Activated CD4-positive, alpha-beta T cell treated with anti-CD3 and anti-CD28 coated beads for 36 hours (primary cell): ENCODE measurements at regions of chr15 and their contacts with region 1.

Region 1: GRCh38 chr15:63277038-63277892 is at the start of gene APH1B:
- DNase-seq: peak; percentile 80
- ATAC-seq: peak; percentile 83
- H3K4me3 Mint-ChIP-seq: peak within 1 kb of the TSS; percentile 78
- H3K27ac Mint-ChIP-seq: peak within 1 kb of the TSS; percentile 88
- H3K4me1 Mint-ChIP-seq: peaks cover 29% of the 10 kb centered on the region
- H3K27me3 Mint-ChIP-seq: no peaks in the 10 kb centered on the region
- total RNA-seq, gene APH1B: 6.5 to 7.8 TPM

Region 2: GRCh38 chr15:63030101-63030551 is 247.1 kb before region 1 on chr15:
- CTCF ChIA-PET with region 1: no interaction called
- POLR2A ChIA-PET with region 1: no interaction called
- intact Hi-C with region 1: no loop called
- DNase-seq: no peak
- ATAC-seq: no peak
- H3K4me3 Mint-ChIP-seq: no peak overlapping the region
- H3K27ac Mint-ChIP-seq: no peak overlapping the region
- H3K4me1 Mint-ChIP-seq: no peaks in the 10 kb centered on the region
- H3K27me3 Mint-ChIP-seq: peaks cover 20% of the 10 kb centered on the region

Region 3: DNA sequence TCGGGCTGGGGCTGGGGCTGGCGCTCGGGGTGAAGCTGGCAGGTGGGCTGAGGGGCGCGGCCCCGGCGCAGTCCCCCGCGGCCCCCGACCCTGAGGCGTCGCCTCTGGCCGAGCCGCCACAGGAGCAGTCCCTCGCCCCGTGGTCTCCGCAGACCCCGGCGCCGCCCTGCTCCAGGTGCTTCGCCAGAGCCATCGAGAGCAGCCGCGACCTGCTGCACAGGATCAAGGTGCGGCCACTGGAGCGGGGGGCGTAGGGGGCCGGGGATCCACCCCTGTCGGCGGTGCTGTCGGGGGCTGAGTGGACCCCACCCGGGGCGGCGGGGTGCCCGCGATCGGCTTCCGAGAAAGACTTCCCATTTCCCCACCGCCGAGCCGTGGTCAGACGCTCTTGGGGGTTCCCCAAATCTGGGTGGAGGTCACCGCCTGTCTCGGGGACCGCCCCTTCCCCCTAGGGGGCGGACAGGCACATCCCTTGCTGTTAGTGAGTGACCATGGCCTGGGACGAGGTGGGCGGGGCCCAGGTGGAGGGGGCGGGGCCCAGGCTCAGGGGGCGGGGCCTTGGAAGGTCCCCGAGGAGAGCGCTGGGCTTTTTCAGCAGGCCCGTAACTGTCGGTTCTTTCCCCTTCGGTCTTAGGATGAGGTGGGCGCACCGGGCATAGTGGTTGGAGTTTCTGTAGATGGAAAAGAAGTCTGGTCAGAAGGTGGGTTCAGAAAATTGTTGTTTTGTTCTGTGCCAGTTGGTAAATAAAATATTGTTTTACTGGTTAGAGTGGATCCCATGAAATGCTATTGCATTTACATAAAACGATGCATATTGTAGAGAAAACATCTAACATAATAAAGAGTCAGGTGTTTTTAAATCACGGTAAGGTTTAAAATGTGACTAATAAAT is 155.0 kb before region 1 on chr15:
- CTCF ChIA-PET with region 1: no interaction called
- POLR2A ChIA-PET with region 1: no interaction called
- intact Hi-C with region 1: loop called in 1 of 2 experiments (anchors 1 kb)
- DNase-seq: peak; percentile 91
- ATAC-seq: peak; percentile 89
- H3K4me3 Mint-ChIP-seq: peak overlapping the region; percentile 92
- H3K27ac Mint-ChIP-seq: peak overlapping the region; percentile 88
- H3K4me1 Mint-ChIP-seq: peaks cover 12% of the 10 kb centered on the region
- H3K27me3 Mint-ChIP-seq: no peaks in the 10 kb centered on the region